ENCODE measurements at regions of chr10 and their contacts with region 1.

Region 1: GRCh38 chr10:103666087-103666761 is 172.7 kb downstream of the NEURL1 start:
- DNase-seq: peak; percentile 70
- ATAC-seq: peak; percentile 14; the same call in 1 of the 2 replicates
- H3K4me3 Mint-ChIP-seq: no peak overlapping the region
- H3K27ac Mint-ChIP-seq: peak overlapping the region; percentile 73; the same call in 1 of the 2 replicates
- H3K4me1 Mint-ChIP-seq: peaks cover 28% of the 10 kb centered on the region
- H3K27me3 Mint-ChIP-seq: no peaks in the 10 kb centered on the region
- CTCF ChIP-seq: 0 out of 2 replicates have a peak, but pooled peaks have one; percentile 29

Region 2: DNA sequence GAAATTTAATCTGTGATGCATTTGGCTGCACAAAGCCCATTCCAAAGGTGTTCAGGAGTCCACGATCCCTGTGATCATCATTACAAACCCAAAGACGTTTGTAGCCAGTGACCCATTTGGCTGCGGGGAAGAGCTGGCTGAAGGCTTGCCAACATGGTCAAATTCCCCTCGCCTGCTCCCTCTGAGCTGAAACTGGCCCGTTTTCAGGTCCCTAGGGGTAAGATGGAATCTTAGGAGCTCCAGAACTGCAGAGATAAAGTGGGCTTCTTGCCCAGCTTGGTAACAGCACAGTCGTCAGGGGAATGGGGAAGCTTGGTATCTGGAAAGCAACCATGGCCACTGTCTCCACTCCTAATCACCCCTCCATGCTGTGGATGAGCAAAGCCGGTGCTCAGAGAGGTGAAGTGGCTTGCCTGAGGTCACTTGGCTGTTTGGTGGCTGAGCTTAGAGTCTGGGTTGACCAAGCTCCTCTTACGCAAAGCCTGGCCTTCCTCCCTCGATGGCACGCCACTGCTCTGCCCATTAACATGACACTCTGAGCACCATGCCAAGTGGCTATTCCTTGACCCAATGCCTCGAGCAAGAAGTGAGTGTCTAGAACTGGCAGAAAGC is 17.2 kb before region 1 on chr10:
- CTCF ChIA-PET with region 1: interaction called, 10 read pairs
- POLR2A ChIA-PET with region 1: interaction called, 4 read pairs
- DNase-seq: no peak
- ATAC-seq: no peak
- H3K4me3 Mint-ChIP-seq: no peak overlapping the region
- H3K27ac Mint-ChIP-seq: peak overlapping the region; percentile 29; the same call in 1 of the 2 replicates
- H3K4me1 Mint-ChIP-seq: peaks cover 62% of the 10 kb centered on the region
- H3K27me3 Mint-ChIP-seq: no peaks in the 10 kb centered on the region
- CTCF ChIP-seq: no peak